Posterior cingulate gyrus (tissue), 11 donors: ENCODE measurements at regions of chr19 and their contacts with region 1.

Region 1: DNA sequence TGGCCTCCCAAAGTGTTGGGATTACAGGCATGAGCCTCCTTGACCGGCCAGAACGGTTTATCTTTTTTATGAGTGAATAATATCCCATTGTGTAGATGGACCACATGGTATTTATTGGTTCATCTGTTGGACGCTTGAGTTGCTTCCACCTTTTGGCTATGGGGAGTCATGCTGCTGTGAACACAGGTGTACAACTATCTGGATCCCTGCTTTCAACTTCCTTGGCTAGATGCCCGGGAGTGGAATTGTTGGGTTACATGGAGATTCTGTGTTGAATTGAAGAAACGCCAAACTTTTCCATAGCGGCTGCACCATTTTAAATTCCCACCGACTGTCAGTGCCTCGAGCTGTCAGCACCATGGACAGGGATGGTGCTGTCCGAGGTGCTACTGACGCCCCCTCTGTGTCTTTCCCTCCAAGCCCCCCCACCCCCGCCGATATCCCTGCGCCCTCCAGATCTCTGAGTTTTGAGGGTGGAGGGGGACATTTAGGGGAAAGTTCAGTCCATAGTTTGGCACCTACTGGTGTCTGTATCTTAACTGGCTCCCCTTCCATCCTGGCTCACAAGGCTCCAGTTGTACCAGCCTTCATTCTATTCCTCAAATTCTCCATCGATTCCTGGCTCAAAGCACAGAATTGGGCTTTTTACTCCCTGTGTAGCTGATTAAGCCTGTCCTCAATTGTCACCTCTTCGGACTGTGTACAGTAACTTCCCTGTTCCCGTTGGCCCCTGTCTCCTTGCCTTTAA is 27.3 kb downstream of the PNPLA6 start:
- DNase-seq: no peak

Region 2: DNA sequence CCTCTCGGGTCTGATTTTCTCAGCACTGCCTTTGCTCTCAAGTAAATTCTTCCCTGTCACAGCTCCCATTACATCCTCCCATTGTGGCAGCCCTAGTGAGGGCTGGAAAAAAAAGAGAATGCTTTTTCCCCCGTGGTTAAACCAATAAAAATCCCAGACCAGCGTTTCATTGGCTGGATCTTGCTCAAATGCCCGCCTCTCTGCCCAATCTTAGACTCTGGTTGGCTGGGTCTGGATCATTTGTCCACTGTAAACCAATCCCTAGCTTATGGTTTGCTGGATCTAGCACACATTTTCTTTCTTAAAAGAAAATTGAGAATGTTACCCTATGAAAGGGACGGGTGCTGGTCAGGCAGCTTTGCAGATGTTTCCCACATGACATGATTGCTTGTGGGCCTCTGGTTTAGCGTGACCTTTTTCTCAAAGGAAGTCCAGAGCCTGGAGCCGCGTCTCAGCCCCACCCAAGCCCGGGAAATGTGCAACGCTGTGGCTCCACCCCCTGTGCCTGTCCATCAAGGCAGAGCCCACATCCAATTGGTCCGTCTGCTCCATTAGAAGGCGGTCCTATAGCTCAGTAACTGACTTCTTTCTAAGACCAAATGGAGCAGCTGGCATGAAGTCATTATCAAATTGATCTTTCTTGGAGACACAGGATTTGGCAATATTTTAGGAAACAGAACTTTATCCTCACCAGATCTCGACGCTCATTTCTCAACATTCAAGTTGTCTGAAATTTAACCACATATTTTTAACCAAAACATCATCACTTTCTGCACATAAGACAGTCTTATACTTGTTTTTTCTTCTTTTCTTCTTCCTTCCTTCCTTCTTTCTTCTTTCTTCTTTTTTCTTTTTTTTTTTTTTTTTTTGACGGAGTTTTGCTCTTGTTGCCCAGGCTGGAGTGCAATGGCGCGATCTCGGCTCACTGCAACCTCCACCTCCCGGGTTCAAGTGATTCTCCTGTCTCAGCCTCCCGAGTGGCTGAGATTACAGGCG is 111.5 kb after region 1 on chr19:
- intact Hi-C with region 1: loop called (anchors 10 kb)
- DNase-seq: peak in 8 of 10 donors; percentile 28 to 94 (median 60)